ENCODE measurements at regions of chr19 and their contacts with region 1.

Region 1: DNA sequence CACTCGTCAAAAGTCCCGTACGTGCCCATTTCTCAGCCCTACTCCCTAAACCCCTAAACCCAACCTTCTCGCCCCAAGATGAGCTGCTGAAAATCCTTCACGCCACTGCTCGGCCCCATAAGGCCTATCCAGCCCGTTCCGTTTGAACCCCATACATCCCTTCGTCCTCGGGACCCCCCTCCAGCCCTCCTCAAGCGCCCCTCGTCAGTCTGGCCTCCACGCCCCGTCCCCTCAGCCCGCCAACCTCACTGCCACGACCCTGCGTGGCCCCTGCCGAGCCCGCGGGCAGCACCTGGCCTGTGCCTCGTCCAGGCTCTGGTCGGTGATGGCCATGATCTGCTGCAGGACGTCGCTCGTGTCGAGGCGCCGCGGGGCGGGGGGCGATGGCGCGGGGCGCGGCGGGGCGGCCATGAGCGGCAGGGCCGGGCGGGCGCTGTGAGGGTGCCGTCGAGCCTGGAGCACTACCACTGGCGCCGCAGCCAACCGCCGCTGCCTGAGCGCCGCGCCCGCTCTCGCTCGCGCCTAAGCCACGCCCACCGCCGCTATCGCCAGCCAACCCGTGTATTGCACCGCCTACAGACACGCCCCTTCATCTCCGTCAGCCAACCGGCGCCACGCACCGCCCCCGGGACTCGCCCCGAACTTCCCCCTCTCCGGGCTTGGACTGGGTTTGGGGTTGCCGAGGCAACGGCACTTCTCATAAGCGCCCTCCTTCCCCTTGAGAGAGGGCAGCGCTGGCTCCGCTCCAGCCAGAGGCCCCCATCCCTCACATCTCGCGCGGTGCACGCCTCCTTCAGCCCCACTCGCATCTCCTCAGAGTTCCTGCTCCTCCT is at the start of gene PBX4:
- DNase-seq: peak; percentile 95 to 100 (median 99)
- ATAC-seq: peak; percentile 91 to 96 (median 94)
- H3K4me3 ChIP-seq: peak within 1 kb of the TSS; percentile 72 to 89
- H3K4me3 Mint-ChIP-seq: peak within 1 kb of the TSS; percentile 74 to 95 (median 89)
- H3K27ac ChIP-seq: peak within 1 kb of the TSS; percentile 85
- H3K27ac Mint-ChIP-seq: peak within 1 kb of the TSS; percentile 84 to 90
- H3K4me1 ChIP-seq: peaks cover 6 to 51% of the 10 kb centered on the region in 2 experiments
- H3K4me1 Mint-ChIP-seq: peaks cover 47 to 52% (median 51%) of the 10 kb centered on the region in 3 donors
- H3K27me3 ChIP-seq: no peaks in the 10 kb centered on the region
- H3K27me3 Mint-ChIP-seq: no peaks in the 10 kb centered on the region
- total RNA-seq, gene PBX4: 40.9 to 48.3 (median 42.7) TPM

Region 2: GRCh38 chr19:18274781-18275356 is 1343.6 kb before region 1 on chr19:
- CTCF ChIA-PET with region 1: no interaction called
- POLR2A ChIA-PET with region 1: interaction called in 1 of 2 experiments, 10 read pairs
- DNase-seq: peak in 4 of 35 experiments; percentile 19 to 52 (median 33)
- ATAC-seq: peak in 1 of 4 experiments; percentile 3
- H3K4me3 ChIP-seq: no peak overlapping the region
- H3K4me3 Mint-ChIP-seq: peak overlapping the region in 1 of 3 donors; percentile 37
- H3K27ac ChIP-seq: no peak overlapping the region
- H3K27ac Mint-ChIP-seq: peak overlapping the region; percentile 55 to 61
- H3K4me1 ChIP-seq: peaks cover 18 to 48% of the 10 kb centered on the region in 2 experiments
- H3K4me1 Mint-ChIP-seq: peaks cover 40 to 53% (median 40%) of the 10 kb centered on the region in 3 donors
- H3K27me3 ChIP-seq: no peaks in the 10 kb centered on the region
- H3K27me3 Mint-ChIP-seq: no peaks in the 10 kb centered on the region

Region 3: GRCh38 chr19:19591133-19591825 is 27.2 kb before region 1 on chr19:
- CTCF ChIA-PET with region 1: interaction called in 1 of 2 experiments, 10 read pairs
- POLR2A ChIA-PET with region 1: interaction called in 1 of 2 experiments, 12 read pairs
- DNase-seq: peak in 33 of 35 experiments; percentile 14 to 85 (median 51)
- ATAC-seq: peak; percentile 76 to 87 (median 82)
- H3K4me3 ChIP-seq: no peak overlapping the region
- H3K4me3 Mint-ChIP-seq: peak overlapping the region; percentile 29 to 53 (median 36)
- H3K27ac ChIP-seq: peak overlapping the region; percentile 97
- H3K27ac Mint-ChIP-seq: peak overlapping the region; percentile 89 to 92
- H3K4me1 ChIP-seq: peaks cover 3 to 67% of the 10 kb centered on the region in 2 experiments
- H3K4me1 Mint-ChIP-seq: peaks cover 41 to 63% (median 56%) of the 10 kb centered on the region in 3 donors
- H3K27me3 ChIP-seq: no peaks in the 10 kb centered on the region
- H3K27me3 Mint-ChIP-seq: no peaks in the 10 kb centered on the region

Measured in T-cell (primary cell).